ENCODE measurements at regions of chr1 and their contacts with region 1.

Region 1: DNA sequence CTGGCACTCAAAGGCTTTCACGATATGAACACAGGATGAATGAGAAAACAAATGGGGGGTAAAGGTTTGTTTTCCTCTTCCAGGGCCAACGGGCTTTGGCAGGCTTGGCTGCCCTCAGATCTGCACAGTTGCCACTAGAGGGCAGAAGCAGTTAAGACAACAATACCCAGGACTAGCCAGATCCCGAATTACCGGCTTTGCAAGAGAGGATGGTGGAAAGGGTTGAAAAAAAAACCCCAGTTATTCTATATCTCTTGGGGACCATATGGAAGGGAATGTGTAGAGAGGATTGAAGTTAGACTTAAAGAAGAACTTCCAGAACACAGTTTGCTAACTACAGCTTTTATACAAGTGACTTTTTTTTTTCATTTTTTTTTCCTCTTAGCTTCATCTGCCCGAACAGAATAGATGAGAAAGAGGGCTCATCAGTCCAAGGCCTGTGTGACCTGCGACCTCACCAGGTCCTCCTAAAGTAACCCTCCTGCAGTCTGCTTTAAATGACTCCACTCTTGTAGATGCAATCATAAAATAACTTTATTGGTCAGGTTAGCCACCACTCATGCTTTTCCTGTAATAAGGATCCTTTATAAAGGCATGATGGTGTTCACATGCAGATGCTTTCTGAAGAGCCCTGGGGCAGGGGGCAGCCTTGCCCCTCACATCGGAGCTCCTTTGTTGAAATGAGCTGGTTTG is 10.7 kb downstream of the FMOD start:
- DNase-seq: peak; percentile 45
- H3K4me3 Mint-ChIP-seq: no peak overlapping the region
- H3K27ac Mint-ChIP-seq: no peak overlapping the region
- H3K4me1 Mint-ChIP-seq: peaks cover 35% of the 10 kb centered on the region
- H3K27me3 Mint-ChIP-seq: peaks cover 30% of the 10 kb centered on the region

Region 2: DNA sequence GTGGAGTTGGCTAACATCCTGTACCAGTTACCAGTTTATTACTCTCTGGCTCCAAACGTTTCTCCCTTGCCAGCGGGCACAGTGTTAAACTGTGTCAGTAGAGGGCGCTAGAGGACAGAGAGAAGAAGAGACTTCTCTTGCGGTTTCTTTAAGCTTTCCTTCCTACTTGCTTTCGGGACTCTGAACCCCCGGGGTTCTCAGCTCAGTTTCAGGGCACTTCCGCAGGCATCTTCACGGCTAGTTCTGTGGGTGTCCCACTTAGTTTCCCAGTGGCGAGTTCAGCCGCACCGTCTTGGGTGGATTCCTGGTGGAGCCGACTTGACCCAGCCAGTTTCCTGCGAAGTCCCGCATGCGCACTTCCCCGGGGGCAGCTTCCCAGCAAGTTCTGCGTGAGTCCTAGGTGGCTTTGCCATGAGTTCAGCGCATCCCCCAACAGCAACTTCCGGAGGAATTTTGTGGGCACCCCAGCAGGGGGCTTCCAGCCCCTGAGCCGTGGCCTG is 72.9 kb before region 1 on chr1:
- intact Hi-C with region 1: loop called (anchors 1 kb)
- DNase-seq: peak; percentile 78
- H3K4me3 Mint-ChIP-seq: peak overlapping the region; percentile 79
- H3K27ac Mint-ChIP-seq: peak overlapping the region; percentile 19
- H3K4me1 Mint-ChIP-seq: peaks cover 15% of the 10 kb centered on the region
- H3K27me3 Mint-ChIP-seq: peaks cover 6% of the 10 kb centered on the region

Region 3: GRCh38 chr1:203273206-203273868 is 66.9 kb before region 1 on chr1:
- intact Hi-C with region 1: loop called (anchors 1 kb)
- DNase-seq: peak; percentile 85
- H3K4me3 Mint-ChIP-seq: peak overlapping the region; percentile 72
- H3K27ac Mint-ChIP-seq: peak overlapping the region; percentile 79
- H3K4me1 Mint-ChIP-seq: peaks cover 58% of the 10 kb centered on the region
- H3K27me3 Mint-ChIP-seq: no peaks in the 10 kb centered on the region

Region 4: GRCh38 chr1:203304919-203305808 is 35.1 kb before region 1 on chr1 and contains the start of gene BTG2:
- intact Hi-C with region 1: loop called (anchors 1 kb)
- DNase-seq: peak; percentile 89
- H3K4me3 Mint-ChIP-seq: peak within 1 kb of the TSS; percentile 92
- H3K27ac Mint-ChIP-seq: peak within 1 kb of the TSS; percentile 93
- H3K4me1 Mint-ChIP-seq: peaks cover 61% of the 10 kb centered on the region
- H3K27me3 Mint-ChIP-seq: no peaks in the 10 kb centered on the region
- total RNA-seq, gene BTG2: 137 and 139 TPM in 2 replicates

Region 5: DNA sequence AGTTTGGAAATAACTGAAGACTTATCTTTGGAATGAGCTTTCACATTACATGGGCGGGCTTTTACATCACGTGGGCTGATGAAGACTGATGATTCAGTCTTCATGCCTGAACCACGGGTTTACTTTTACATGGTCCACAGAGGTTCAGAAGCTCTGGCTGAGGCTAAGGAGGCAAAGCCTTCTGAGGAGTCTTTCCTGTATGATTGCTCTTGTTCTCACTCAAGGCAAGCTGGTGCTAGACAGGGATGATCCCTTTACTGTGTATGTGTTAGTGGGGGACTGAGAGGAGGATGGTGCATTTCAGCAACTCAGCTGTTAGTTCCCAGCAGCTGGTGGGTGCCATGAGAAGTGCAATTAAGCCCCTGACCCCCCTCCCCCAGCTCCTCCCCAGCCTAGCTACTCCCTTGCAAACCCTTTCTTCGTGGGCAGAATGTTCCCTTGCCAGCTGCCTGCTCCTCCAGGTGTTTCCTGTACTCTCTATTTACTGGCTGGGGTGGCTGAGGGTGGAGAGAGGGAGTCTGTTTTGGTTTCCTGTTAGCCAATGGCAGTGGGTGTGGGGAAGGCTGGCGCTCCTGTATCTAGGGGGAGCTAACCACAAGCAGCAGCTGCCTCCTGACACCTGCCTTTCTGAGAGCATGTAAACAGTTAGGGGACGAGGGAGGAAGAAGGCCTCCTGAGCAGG is 19.5 kb before region 1 on chr1:
- intact Hi-C with region 1: no loop called
- DNase-seq: peak; percentile 67
- H3K4me3 Mint-ChIP-seq: peak overlapping the region; percentile 55
- H3K27ac Mint-ChIP-seq: peak overlapping the region; percentile 59
- H3K4me1 Mint-ChIP-seq: peaks cover 90% of the 10 kb centered on the region
- H3K27me3 Mint-ChIP-seq: peaks cover 2% of the 10 kb centered on the region

Region 6: GRCh38 chr1:203486618-203487370 is 146.5 kb after region 1 on chr1:
- intact Hi-C with region 1: loop called (anchors 1 kb)
- DNase-seq: no peak
- H3K4me3 Mint-ChIP-seq: peak overlapping the region; percentile 61
- H3K27ac Mint-ChIP-seq: no peak overlapping the region
- H3K4me1 Mint-ChIP-seq: peaks cover 10% of the 10 kb centered on the region
- H3K27me3 Mint-ChIP-seq: peaks cover 8% of the 10 kb centered on the region

Measured in activated T-helper 1 cell treated with anti-CD3 and anti-CD28 coated beads, Interleukin-12 subunit alpha, Interleukin-12 subunit beta, Interleukin-2, Interleukin-4 antibody, amounts not matched to agents 30 ng/mL and 10 ng/mL and 1 ng/mL, durations not matched to agents 14 hours and 24 hours and 36 hours (primary cell).